Activated CD4-positive, alpha-beta memory T cell treated with anti-CD3 and anti-CD28 coated beads for 36 hours (primary cell): ENCODE measurements at regions of chr6 and their contacts with region 1.

Region 1: DNA sequence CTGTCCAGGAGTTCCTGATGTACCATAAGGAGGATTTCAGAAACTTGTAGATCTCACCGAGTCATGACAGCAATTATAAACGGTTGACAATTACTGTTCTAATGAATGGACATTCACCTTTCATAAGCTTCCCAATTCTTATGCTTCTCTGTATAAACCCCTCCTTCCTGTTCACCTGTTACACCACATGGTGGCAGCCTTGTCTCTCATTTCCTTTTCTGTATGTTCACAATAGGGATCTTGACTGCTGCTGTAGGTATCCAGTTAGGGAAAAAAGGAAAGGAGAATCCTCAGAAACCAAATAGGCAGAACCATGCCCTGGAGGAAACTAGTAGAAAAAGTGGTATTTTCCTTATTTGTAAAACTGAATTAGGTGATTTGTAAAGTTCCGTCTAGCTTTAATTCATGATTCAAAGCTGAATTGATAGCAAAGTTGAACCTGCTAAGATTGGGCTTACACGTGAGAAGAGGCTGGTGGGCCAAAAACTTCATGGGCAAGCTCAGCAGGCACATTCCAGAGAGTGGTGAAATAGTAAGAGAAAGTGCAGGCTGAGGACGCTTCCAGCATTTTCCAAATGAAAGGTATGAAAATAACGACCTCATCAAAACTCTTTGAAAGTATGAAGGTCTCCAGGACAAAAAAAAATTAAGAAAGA is 29.0 kb upstream of the TBPL1 start:
- DNase-seq: peak; percentile 60
- H3K4me3 Mint-ChIP-seq: no peak overlapping the region
- H3K27ac Mint-ChIP-seq: no peak overlapping the region
- H3K4me1 Mint-ChIP-seq: no peaks in the 10 kb centered on the region
- H3K27me3 Mint-ChIP-seq: peaks cover 27% of the 10 kb centered on the region

Region 2: GRCh38 chr6:133937909-133938308 is 13.8 kb after region 1 on chr6:
- CTCF ChIA-PET with region 1: interaction called, 14 read pairs
- POLR2A ChIA-PET with region 1: no interaction called
- intact Hi-C with region 1: no loop called
- DNase-seq: no peak
- H3K4me3 Mint-ChIP-seq: no peak overlapping the region
- H3K27ac Mint-ChIP-seq: no peak overlapping the region
- H3K4me1 Mint-ChIP-seq: no peaks in the 10 kb centered on the region
- H3K27me3 Mint-ChIP-seq: peaks cover 18% of the 10 kb centered on the region

Region 3: GRCh38 chr6:133952815-133953633 is 29.0 kb after region 1 on chr6 and contains the start of gene TBPL1:
- CTCF ChIA-PET with region 1: interaction called, 15 read pairs
- POLR2A ChIA-PET with region 1: no interaction called
- intact Hi-C with region 1: loop called (anchors 2 kb)
- DNase-seq: peak; percentile 93
- H3K4me3 Mint-ChIP-seq: peak within 1 kb of the TSS; percentile 93
- H3K27ac Mint-ChIP-seq: peak within 1 kb of the TSS; percentile 89
- H3K4me1 Mint-ChIP-seq: peaks cover 37% of the 10 kb centered on the region
- H3K27me3 Mint-ChIP-seq: no peaks in the 10 kb centered on the region
- total RNA-seq, gene TBPL1: 31.3 to 35.7 TPM

Region 4: GRCh38 chr6:134047673-134048072 is 123.6 kb after region 1 on chr6:
- CTCF ChIA-PET with region 1: interaction called, 10 read pairs
- POLR2A ChIA-PET with region 1: no interaction called
- intact Hi-C with region 1: no loop called
- DNase-seq: no peak
- H3K4me3 Mint-ChIP-seq: no peak overlapping the region
- H3K27ac Mint-ChIP-seq: no peak overlapping the region
- H3K4me1 Mint-ChIP-seq: peaks cover 7% of the 10 kb centered on the region
- H3K27me3 Mint-ChIP-seq: peaks cover 12% of the 10 kb centered on the region

Region 5: GRCh38 chr6:134074151-134075055 is 150.3 kb after region 1 on chr6:
- CTCF ChIA-PET with region 1: interaction called, 13 read pairs
- POLR2A ChIA-PET with region 1: no interaction called
- intact Hi-C with region 1: no loop called
- DNase-seq: no peak
- H3K4me3 Mint-ChIP-seq: no peak overlapping the region
- H3K27ac Mint-ChIP-seq: no peak overlapping the region
- H3K4me1 Mint-ChIP-seq: no peaks in the 10 kb centered on the region
- H3K27me3 Mint-ChIP-seq: peaks cover under 1% of the 10 kb centered on the region

Region 6: GRCh38 chr6:134097114-134097707 is 173.1 kb after region 1 on chr6:
- CTCF ChIA-PET with region 1: interaction called, 362 read pairs
- POLR2A ChIA-PET with region 1: interaction called, 8 read pairs
- intact Hi-C with region 1: loop called (anchors 1 kb)
- DNase-seq: peak; percentile 67
- H3K4me3 Mint-ChIP-seq: no peak overlapping the region
- H3K27ac Mint-ChIP-seq: no peak overlapping the region
- H3K4me1 Mint-ChIP-seq: no peaks in the 10 kb centered on the region
- H3K27me3 Mint-ChIP-seq: peaks cover 11% of the 10 kb centered on the region